Gastrocnemius medialis (tissue), 4 donors: ENCODE measurements at regions of chr17 and their contacts with region 1.

Region 1: GRCh38 chr17:45135192-45135977 is at the start of gene ACBD4:
- DNase-seq: peak; percentile 94 to 95
- ATAC-seq: peak; percentile 89
- H3K4me3 ChIP-seq: peak within 1 kb of the TSS; percentile 62 to 88 (median 70)
- H3K27ac ChIP-seq: peak within 1 kb of the TSS; percentile 79 to 89 (median 80)
- H3K4me1 ChIP-seq: peaks cover 25 to 31% of the 10 kb centered on the region in 2 donors
- H3K27me3 ChIP-seq: no peaks in the 10 kb centered on the region
- CTCF ChIP-seq: peak; percentile 100
- POLR2A ChIP-seq: peak; percentile 44 to 52
- total RNA-seq, gene ACBD4: 2.2 to 3.2 (median 2.5) TPM

Region 2: DNA sequence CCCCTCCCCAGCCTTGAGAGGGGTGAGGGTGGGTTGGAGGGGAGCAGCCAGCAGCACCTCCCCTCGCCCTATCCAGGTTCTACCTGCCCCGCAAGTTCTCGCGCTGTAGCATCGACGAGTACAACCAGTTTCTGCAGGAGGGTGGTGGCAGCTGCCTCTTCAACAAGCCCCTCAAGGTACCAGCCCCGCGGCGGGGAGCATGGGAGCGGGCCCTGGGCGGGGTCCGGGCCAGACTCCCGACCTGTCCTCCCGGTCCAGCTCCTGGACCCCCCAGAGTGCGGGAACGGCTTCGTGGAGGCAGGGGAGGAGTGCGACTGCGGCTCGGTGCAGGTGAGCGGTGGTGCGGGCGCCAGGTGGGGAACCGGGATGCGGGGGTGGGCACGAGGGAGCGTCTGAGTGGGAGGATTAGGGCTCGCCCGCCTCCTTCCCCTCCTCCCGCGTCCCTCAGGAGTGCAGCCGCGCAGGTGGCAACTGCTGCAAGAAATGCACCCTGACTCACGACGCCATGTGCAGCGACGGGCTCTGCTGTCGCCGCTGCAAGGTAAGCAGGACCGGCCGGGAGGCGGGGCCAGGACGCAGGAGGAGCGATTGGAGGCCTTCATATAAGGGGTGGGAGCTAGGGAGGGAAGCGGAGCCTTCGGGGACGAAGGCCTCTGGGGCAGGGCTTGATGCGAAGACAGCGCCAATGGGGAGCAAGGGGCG is 360.1 kb before region 1 on chr17:
- in situ Hi-C with region 1: no loop called
- intact Hi-C with region 1: loop called (anchors 2 kb)
- DNase-seq: peak; percentile 87 to 90
- ATAC-seq: peak; percentile 91 to 94
- H3K4me3 ChIP-seq: peak overlapping the region; percentile 56 to 88 (median 64)
- H3K27ac ChIP-seq: peak overlapping the region in 1 of 4 donors; percentile 20
- H3K4me1 ChIP-seq: peaks cover 6 to 14% of the 10 kb centered on the region in 2 donors
- H3K27me3 ChIP-seq: peaks cover 0 to 15% (median 8%) of the 10 kb centered on the region in 3 donors
- CTCF ChIP-seq: peak in 1 of 5 experiments; percentile 0
- POLR2A ChIP-seq: no peak

Region 3: DNA sequence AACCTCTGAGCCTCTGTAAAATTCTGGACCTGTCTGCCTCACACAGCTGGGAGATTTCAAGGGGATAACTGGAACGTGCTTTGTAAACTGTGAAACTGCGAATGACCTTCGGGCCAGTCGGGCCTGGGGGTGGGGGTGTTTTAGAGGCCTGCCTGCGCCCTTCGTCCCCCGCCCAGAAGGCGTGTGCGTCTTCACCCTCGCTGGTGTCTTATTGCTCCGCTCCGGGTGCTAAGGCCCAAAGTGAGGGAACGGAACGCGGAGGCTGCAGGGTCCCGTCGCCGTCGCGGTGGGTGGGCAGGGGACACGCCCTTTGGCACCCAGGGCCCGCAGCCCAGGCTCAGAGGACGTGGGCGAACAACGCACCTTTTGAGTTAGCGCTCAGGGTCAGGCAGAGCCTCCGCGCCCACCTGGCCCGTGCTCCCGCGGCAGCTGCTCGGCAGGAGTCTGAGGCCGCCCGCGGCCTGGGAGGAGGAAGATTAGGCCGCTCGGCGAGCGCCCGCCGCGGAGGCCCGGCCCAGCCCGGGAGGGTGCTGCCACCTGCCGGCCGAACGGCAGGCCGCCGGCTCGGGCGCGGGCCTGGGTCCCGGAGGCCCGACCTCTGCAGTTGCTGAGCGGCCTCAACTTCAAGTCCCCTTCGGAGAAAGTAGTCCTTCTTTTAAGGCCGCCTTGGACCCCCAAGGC is 113.6 kb before region 1 on chr17:
- in situ Hi-C with region 1: no loop called
- intact Hi-C with region 1: loop called (anchors 5 kb)
- DNase-seq: peak; percentile 23 to 47
- ATAC-seq: peak; percentile 70 to 81
- H3K4me3 ChIP-seq: peak overlapping the region; percentile 50 to 83 (median 54)
- H3K27ac ChIP-seq: peak overlapping the region; percentile 32 to 66 (median 64)
- H3K4me1 ChIP-seq: peaks cover 16 to 17% of the 10 kb centered on the region in 2 donors
- H3K27me3 ChIP-seq: no peaks in the 10 kb centered on the region
- CTCF ChIP-seq: peak; percentile 71 to 97 (median 96)
- POLR2A ChIP-seq: no peak

Region 4: DNA sequence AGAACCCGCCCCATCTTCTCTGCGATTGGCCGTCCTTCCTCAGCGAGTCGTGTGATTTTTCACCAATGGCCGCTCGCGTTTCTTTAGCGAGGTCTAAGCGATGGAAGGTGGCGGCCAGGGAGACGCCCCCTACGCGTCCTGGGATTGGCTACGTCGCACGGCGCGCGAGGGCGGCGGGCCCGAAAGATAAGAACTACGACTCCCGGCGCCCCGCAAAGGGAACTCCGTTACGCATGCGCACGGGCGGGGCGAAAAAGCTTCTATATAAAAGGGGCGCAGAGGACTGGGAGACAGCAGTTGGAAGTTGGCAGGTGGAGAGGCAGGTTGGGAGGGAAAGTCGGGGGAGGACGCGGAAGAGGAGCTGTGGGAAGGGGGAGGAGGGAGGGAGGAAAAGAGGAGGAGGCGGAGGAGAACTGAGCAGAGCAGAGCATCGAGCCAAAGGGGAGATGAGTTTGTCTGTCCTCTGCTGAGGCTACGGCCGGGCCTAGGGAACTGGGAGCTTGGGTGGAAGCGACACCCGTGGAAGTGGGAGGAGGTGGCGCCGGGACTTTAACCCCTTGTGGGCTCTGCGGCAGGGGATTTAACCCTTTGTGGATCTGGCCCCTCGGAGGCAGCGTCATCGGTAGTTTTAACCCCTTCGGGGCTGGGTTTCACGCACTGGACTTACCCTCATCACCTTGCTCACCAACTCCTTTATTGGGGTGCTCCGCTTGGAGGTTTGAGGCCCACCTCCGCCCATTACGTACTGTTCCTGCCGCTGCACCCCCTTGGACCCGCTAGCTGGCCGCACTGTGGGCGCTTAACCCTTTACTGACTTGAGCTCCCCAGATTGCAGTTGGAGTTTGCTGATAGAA is 13.0 kb after region 1 on chr17 and contains the start of gene HEXIM1:
- in situ Hi-C with region 1: no loop called
- intact Hi-C with region 1: loop called (anchors 1 kb)
- DNase-seq: peak; percentile 99 to 100
- ATAC-seq: peak; percentile 70
- H3K4me3 ChIP-seq: peak within 1 kb of the TSS; percentile 80 to 88 (median 84)
- H3K27ac ChIP-seq: peak within 1 kb of the TSS; percentile 90 to 98 (median 98)
- H3K4me1 ChIP-seq: peaks cover 36 to 50% of the 10 kb centered on the region in 2 donors
- H3K27me3 ChIP-seq: no peaks in the 10 kb centered on the region
- CTCF ChIP-seq: peak in 1 of 5 experiments; percentile 5
- POLR2A ChIP-seq: peak; percentile 99 to 100
- total RNA-seq, gene HEXIM1: 26.3 to 79.6 (median 36.9) TPM

Region 5: DNA sequence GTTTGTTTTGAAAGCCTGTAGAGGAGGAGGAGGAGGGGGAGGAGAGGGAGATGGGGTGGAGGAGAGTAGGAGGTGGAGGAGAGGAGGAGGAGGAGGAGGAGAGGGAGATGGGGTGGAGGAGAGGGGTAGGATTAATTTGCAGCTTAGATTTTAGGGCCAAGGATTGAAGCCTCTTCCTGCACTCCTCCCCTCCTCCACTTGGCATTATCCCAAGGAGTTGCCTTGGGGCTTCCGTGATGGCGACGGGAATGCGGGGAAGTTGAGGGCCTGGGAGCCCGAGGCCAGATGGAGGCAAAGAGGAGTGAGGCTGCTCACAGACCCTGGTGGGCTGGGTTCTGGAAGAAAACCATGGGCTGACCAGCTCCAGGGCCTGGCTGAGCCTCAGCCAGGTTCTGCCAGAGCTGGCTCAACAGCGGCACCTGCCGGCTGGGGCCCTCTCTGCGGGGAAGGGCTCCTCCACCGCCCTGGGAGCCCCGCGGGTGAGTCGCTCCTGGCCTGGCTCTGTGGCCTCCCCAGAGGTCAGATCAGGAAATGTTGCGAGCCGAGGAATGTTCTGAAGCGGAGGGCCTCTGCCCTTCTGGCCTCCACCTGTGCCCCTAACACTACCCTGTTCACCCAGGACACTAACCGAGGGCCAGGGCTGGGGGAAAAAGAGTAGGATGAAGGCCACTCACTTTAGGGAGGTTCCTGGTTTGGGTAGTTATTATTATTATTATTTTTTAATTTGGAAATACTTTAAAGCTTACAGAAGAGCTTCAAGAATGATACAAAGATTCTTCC is 62.4 kb after region 1 on chr17:
- in situ Hi-C with region 1: loop called (anchors 5 to 10 kb)
- intact Hi-C with region 1: loop called (anchors 1 kb)
- DNase-seq: peak; percentile 84 to 90
- ATAC-seq: peak; percentile 88
- H3K4me3 ChIP-seq: no peak overlapping the region
- H3K27ac ChIP-seq: peak overlapping the region; percentile 60 to 65 (median 63)
- H3K4me1 ChIP-seq: peaks cover 5 to 6% of the 10 kb centered on the region in 2 donors
- H3K27me3 ChIP-seq: no peaks in the 10 kb centered on the region
- CTCF ChIP-seq: peak; percentile 99 to 100 (median 99)
- POLR2A ChIP-seq: no peak

Region 6: DNA sequence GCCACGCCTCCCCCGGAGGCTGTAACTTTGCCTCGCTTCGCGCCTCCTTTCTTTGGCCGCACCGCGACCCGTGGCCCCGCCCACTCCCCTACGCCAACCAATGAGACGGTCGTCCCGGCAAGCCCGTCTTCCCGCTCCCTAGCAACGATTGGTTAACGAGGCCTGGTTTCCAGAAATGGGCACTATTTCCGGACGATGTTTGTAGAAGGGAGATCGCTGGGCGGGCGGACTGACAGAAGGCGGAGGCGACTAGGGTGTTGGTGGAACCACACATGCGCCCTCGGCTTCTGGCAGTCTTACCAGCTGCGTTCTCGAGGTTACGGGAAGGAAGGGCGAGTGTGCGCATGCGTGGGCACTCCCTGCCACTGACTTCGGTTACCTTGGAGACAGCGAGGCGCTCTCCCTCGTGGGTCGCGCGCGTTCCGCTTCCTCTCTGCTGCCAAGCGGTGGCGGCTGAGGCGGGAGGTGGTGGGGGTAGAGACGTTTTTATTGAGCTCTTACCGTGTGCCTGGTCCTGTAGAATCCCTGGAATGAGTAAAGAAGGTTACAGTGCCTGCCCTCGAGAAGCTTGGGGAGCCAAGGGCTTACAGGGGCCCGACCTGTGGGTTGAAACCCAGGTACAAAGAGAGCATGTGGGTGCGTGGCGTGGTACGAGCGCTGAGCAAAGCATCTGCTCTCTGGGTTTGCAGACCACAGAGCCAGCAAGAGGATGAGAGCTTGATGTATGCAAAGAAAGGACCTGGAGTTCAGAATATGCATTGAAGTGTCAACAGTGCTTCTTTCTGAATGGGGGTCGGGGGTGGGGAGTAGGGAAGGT is 181.9 kb after region 1 on chr17:
- in situ Hi-C with region 1: no loop called
- intact Hi-C with region 1: no loop called
- DNase-seq: peak; percentile 100
- ATAC-seq: peak; percentile 84 to 85
- H3K4me3 ChIP-seq: peak overlapping the region; percentile 41 to 74 (median 62)
- H3K27ac ChIP-seq: peak overlapping the region; percentile 86 to 98 (median 92)
- H3K4me1 ChIP-seq: peaks cover 43 to 45% of the 10 kb centered on the region in 2 donors
- H3K27me3 ChIP-seq: no peaks in the 10 kb centered on the region
- CTCF ChIP-seq: peak in 1 of 5 experiments; percentile 6
- POLR2A ChIP-seq: no peak

Region 7: DNA sequence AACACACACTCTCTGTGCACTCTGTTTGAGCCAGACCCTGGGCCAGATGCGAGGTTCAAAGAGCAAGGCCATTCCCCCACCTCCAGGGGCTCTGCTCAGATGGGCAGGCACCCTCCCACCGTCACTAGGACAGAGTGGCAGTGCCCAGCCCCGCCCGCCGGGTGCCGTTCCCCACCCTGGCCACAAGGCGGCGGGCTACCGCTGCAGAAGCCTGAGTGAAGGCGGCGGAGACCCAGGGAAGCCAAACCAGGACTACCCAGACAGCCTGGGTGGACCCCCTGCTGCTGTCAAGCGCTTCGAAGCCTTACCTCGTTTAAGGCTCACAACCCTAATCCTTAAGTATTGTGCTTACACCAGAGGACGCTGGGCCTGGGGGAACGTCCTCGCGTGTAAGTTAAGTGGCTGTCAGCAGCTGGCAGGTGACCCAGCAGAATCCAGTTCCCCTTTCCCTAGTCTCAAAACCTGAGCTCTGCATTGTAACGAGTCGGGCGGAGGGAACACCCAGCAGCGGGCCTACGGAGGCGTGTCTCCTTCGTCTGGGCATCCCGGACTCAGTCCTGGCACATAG is 292.7 kb after region 1 on chr17:
- in situ Hi-C with region 1: no loop called
- intact Hi-C with region 1: no loop called
- DNase-seq: peak; percentile 39 to 56
- ATAC-seq: peak; percentile 81 to 82
- H3K4me3 ChIP-seq: peak overlapping the region in 3 of 4 donors; percentile 16 to 52 (median 22)
- H3K27ac ChIP-seq: no peak overlapping the region
- H3K4me1 ChIP-seq: peaks cover 22 to 29% of the 10 kb centered on the region in 2 donors
- H3K27me3 ChIP-seq: peaks cover 33 to 46% (median 42%) of the 10 kb centered on the region in 3 donors
- CTCF ChIP-seq: peak; percentile 80 to 100 (median 97)
- POLR2A ChIP-seq: no peak